Cardiac septum (tissue), 1 donor: ENCODE measurements at regions of chr1 and their contacts with region 1.

Region 1: GRCh38 chr1:236113324-236114032 is 28.9 kb upstream of the GPR137B start:
- DNase-seq: peak; percentile 79

Region 2: GRCh38 chr1:236064674-236065508 is 48.6 kb before region 1 on chr1 and contains the start of gene NID1:
- intact Hi-C with region 1: no loop called
- DNase-seq: peak; percentile 93
- total RNA-seq, gene NID1: 42.1 TPM

Region 3: DNA sequence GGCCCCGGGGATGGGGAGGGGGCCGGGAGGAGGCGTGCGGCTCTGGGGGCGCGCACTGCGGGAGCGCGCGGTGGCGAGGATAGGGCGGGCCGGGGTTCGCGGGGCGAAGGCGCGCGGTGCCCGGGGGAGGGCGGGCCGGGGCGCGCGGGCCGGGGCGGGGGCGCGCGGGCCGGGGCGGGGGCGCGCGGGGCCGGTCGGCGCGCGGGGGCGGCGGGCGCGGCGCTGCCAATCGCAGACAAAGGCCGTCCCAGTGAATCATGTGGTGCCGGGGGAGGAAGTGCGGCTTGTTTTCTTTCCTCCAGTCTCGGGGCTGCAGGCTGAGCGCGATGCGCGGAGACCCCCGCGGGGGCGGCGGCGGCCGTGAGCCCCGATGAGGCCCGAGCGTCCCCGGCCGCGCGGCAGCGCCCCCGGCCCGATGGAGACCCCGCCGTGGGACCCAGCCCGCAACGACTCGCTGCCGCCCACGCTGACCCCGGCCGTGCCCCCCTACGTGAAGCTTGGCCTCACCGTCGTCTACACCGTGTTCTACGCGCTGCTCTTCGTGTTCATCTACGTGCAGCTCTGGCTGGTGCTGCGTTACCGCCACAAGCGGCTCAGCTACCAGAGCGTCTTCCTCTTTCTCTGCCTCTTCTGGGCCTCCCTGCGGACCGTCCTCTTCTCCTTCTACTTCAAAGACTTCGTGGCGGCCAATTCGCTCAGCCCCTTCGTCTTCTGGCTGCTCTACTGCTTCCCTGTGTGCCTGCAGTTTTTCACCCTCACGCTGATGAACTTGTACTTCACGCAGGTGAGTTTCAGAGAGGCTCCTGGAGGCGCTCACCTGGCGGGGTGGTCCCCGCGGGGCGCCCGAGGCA is 29.0 kb after region 1 on chr1 and contains the start of gene GPR137B:
- intact Hi-C with region 1: loop called (anchors 2 kb)
- DNase-seq: peak; percentile 80
- total RNA-seq, gene GPR137B: 44.6 TPM

Region 4: DNA sequence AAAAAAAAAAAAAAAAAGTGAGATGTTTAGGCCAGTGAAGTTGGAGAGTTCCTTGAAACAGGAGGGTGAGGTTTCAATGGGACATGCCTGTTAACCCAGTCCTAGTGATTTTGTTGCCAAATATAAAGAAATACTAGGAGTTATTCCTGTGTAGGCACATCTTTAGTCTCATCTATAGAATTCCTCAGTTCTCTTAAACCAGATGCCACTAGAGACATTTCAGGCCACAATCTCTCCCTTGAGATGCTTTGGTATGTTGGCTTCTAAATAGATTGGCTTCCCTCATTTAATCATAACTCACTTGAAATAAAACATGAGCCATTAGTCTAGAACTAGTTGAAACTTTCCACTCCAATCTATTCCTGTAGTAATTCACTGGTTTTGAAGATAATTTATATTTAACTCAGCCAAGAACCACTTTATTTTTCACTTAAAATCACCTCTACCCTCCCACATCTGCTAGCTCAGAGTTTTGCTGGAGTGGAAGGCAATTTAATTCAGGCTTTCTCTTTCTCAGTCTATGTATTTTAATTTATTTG is 58.6 kb after region 1 on chr1:
- intact Hi-C with region 1: loop called (anchors 5 kb)
- DNase-seq: no peak

Region 5: DNA sequence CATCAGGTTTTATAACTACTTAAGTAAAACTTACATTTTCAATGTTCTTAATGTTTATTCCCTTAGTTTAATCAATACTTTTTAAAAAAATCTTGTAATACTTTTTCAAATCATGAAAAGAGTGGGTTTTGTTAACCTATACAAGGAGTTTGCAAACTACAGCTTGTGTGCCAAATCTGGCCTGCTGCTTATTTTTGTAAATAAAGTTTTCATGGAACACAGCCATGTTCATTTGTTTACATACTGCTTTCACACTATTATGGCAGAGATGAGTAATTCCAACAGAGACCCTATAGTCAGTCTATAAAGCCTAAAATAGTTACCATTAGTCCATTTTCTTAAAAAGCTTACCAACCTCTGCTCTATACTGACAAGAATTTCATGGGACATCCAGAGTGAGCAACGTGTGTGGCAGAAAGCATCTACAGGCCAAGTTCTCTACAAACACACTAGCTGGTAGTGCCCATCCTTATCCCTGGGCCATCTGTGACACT is 125.7 kb after region 1 on chr1:
- intact Hi-C with region 1: no loop called
- DNase-seq: no peak

Region 6: DNA sequence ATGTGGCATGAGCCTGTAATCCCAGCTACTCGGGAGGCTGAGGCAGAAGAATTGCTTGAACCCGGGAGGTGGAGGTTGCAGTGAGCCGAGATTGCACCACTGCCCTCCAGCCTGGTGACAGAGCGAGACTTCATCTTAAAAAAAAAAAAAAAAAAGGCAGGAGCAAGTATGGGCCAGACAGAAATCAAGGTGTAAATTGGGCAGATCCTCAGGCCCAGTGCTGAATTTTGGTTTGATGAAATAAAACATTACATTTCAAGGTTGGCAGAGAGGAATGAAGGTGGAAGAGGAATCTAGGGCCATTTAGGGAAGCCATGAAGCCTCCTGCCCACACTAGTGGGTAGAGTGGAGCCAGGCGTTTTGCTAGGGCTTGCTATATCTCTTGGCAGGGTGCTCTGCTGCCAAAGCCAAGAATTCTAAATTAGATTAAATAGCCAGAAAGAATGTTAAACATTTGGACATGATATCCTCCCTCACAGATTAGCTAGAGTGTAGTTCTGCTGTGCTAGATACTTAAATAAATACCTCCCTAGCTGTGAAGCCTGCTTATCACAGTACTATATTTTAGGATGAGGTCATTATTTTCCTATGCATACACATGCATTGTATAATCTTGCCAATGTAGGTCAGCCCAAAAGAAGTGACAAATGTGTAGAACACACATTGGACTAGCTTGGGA is 393.7 kb after region 1 on chr1:
- intact Hi-C with region 1: loop called (anchors 5 kb)
- DNase-seq: no peak